Activated CD4-positive, alpha-beta T cell treated with anti-CD3 and anti-CD28 coated beads for 36 hours (primary cell): ENCODE measurements at regions of chr17 and their contacts with region 1.

Region 1: DNA sequence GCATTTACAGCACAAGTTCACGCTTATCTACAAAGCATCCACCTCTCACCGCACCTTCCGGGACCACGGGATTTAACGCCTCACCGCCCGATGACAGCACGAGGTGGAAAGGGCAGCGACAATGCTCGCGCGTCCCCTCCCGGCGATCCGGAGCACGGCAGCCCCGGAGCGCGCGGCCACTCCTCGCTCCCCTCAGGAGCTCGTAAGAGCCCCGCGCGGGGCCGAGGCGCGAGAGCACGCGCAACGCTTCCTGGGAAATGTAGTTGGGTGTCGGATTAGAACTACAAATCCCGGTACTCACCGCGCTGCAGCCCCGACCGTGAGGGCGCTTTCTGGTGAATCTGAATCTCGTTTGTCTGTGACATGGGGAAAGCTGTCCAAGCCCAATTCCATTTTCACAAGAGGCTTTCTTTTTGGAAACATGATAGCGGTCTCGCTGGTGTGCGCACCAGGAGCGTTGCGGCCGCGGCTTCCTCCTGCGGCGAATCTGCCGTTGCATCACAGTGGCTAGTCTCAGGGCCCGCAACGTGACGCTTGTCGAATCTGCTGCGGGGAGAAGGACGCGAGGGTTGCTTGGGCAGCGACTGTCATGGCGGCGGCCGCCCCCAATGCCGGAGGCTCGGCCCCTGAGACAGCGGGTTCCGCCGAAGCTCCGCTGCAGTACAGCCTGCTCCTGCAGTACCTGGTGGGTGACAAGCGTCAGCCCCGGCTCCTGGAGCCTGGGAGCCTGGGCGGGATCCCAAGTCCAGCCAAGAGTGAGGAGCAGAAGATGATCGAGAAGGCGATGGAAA is at the start of gene TIMM22:
- DNase-seq: peak; percentile 96
- ATAC-seq: peak; percentile 97
- H3K4me3 Mint-ChIP-seq: peak within 1 kb of the TSS; percentile 86
- H3K27ac Mint-ChIP-seq: peak within 1 kb of the TSS; percentile 96
- H3K4me1 Mint-ChIP-seq: peaks cover 20% of the 10 kb centered on the region
- H3K27me3 Mint-ChIP-seq: no peaks in the 10 kb centered on the region
- total RNA-seq, gene TIMM22: 9.4 to 9.8 TPM

Region 2: GRCh38 chr17:143782-144281 is 852.9 kb before region 1 on chr17:
- CTCF ChIA-PET with region 1: no interaction called
- POLR2A ChIA-PET with region 1: no interaction called
- intact Hi-C with region 1: loop called in 1 of 2 experiments (anchors 5 kb)
- DNase-seq: peak; percentile 93
- ATAC-seq: peak; percentile 87
- H3K4me3 Mint-ChIP-seq: no peak overlapping the region
- H3K27ac Mint-ChIP-seq: no peak overlapping the region
- H3K4me1 Mint-ChIP-seq: no peaks in the 10 kb centered on the region
- H3K27me3 Mint-ChIP-seq: no peaks in the 10 kb centered on the region

Region 3: DNA sequence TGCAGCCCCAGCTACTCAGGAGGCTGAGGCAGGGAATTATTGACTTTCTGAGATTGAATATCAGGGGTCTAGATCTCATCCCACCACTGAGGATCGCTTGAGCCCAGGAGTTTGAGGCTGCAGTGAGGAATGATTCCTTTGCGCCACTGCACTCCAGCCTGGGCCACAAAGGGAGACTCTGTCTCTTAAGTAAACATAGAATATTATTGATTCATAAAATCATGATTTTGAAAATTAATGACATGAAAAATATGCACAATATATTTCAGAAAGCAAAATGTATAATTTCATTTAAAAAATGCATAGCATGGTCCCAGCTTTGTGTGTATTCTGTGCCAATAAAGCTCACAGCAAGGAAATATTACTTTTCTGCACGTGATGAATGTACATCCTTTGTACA is 280.5 kb before region 1 on chr17:
- CTCF ChIA-PET with region 1: no interaction called
- POLR2A ChIA-PET with region 1: no interaction called
- intact Hi-C with region 1: loop called (anchors 1 to 10 kb)
- DNase-seq: no peak
- ATAC-seq: no peak
- H3K4me3 Mint-ChIP-seq: no peak overlapping the region
- H3K27ac Mint-ChIP-seq: no peak overlapping the region
- H3K4me1 Mint-ChIP-seq: peaks cover 26% of the 10 kb centered on the region
- H3K27me3 Mint-ChIP-seq: no peaks in the 10 kb centered on the region

Region 4: GRCh38 chr17:752002-752619 is 244.6 kb before region 1 on chr17 and contains the start of gene GEMIN4:
- CTCF ChIA-PET with region 1: interaction called, 4 read pairs
- POLR2A ChIA-PET with region 1: no interaction called
- intact Hi-C with region 1: loop called in 1 of 2 experiments (anchors 1 kb)
- DNase-seq: peak; percentile 99
- ATAC-seq: peak; percentile 86
- H3K4me3 Mint-ChIP-seq: peak within 1 kb of the TSS; percentile 99
- H3K27ac Mint-ChIP-seq: peak within 1 kb of the TSS; percentile 97
- H3K4me1 Mint-ChIP-seq: peaks cover 32% of the 10 kb centered on the region
- H3K27me3 Mint-ChIP-seq: no peaks in the 10 kb centered on the region
- total RNA-seq, gene GEMIN4: 49.7 to 56.1 TPM

Region 5: DNA sequence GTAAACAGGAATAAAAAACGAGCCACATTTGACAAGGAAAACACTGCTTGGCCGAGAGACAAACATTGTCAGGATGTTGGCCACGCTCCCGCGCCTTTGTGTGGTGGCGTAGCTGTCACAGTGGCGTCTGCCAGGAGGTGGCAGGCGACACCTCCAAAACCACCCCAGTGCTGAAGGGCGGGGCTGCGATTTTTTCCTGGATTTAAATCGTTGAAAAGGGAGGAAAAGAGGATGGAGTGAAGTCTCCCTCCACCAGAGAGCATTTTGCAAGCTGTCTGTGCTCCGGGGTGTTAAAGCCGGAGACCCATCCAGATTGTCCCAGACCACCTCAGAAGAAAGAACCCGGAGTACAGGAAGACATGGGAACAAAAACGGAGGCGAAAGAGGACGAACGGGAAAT is 201.9 kb before region 1 on chr17:
- CTCF ChIA-PET with region 1: interaction called, 13 read pairs
- POLR2A ChIA-PET with region 1: no interaction called
- intact Hi-C with region 1: loop called in 1 of 2 experiments (anchors 1 kb)
- DNase-seq: peak; percentile 73
- ATAC-seq: peak; percentile 80
- H3K4me3 Mint-ChIP-seq: no peak overlapping the region
- H3K27ac Mint-ChIP-seq: no peak overlapping the region
- H3K4me1 Mint-ChIP-seq: peaks cover 6% of the 10 kb centered on the region
- H3K27me3 Mint-ChIP-seq: no peaks in the 10 kb centered on the region

Region 6: GRCh38 chr17:979538-980405 is 17.0 kb before region 1 on chr17 and contains the start of gene NXN:
- CTCF ChIA-PET with region 1: interaction called, 43 read pairs
- POLR2A ChIA-PET with region 1: interaction called, 11 read pairs
- intact Hi-C with region 1: loop called (anchors 1 kb)
- DNase-seq: peak; percentile 94
- ATAC-seq: peak; percentile 78
- H3K4me3 Mint-ChIP-seq: peak within 1 kb of the TSS; percentile 67
- H3K27ac Mint-ChIP-seq: no peak within 1 kb of the TSS
- H3K4me1 Mint-ChIP-seq: peaks cover 15% of the 10 kb centered on the region
- H3K27me3 Mint-ChIP-seq: peaks cover 26% of the 10 kb centered on the region
- total RNA-seq, gene NXN: 0.93 to 1.4 TPM

Region 7: DNA sequence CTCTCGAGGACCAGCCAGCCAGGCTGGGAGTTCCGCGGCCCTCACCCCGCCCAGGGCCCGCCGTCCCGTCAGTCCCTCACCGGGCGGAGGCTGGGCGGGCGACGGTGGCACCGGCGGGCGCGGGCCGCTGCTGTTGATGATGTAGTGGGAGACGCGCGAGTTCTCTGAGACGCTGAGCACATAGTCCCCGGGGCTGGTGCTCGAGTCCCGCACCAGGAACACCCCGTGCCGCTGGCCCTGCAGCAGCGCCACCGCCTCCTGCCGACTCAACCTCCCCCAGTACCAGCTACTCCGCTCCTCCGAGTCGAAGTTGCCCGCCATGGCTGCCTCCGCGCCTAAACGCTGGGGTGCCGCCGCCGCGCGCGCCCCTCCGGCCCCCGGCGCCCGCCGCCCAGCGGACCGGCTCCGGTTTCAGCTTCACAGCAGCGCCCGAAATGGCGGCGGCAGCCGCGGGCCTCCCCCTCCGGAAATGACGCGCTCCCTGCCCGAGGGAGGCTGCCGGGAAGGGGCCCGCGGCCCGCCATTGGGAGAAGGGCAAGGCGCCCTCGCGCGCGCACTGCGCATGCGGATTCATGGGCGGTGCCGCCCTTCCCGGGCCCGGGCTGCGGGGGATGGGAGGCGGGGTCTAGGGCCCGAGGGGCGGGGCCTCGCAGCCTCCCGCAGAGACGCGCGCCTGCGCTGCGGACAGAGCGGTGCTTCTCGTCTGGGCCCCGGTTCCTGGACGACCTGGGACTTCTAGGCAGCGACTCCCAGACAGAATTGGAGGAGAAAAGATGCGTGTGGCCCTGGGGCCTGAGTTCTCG is 459.2 kb after region 1 on chr17 and contains the start of gene CRK:
- CTCF ChIA-PET with region 1: no interaction called
- POLR2A ChIA-PET with region 1: no interaction called
- intact Hi-C with region 1: loop called in 1 of 2 experiments (anchors 2 kb)
- DNase-seq: peak; percentile 99
- ATAC-seq: peak; percentile 93
- H3K4me3 Mint-ChIP-seq: peak within 1 kb of the TSS; percentile 82
- H3K27ac Mint-ChIP-seq: peak within 1 kb of the TSS; percentile 89
- H3K4me1 Mint-ChIP-seq: peaks cover 46% of the 10 kb centered on the region
- H3K27me3 Mint-ChIP-seq: peaks cover 9% of the 10 kb centered on the region
- total RNA-seq, gene CRK: 10.1 to 11.6 TPM